A673 (cell line): ENCODE measurements at regions of chr14 and their contacts with region 1.

Region 1: GRCh38 chr14:58501214-58501816 is 73.8 kb downstream of the KIAA0586 start:
- DNase-seq: peak; percentile 74
- H3K4me3 ChIP-seq: no peak overlapping the region
- H3K27ac ChIP-seq: no peak overlapping the region
- H3K4me1 ChIP-seq: no peaks in the 10 kb centered on the region
- H3K27me3 ChIP-seq: no peaks in the 10 kb centered on the region
- CTCF ChIP-seq: peak; percentile 89

Region 2: DNA sequence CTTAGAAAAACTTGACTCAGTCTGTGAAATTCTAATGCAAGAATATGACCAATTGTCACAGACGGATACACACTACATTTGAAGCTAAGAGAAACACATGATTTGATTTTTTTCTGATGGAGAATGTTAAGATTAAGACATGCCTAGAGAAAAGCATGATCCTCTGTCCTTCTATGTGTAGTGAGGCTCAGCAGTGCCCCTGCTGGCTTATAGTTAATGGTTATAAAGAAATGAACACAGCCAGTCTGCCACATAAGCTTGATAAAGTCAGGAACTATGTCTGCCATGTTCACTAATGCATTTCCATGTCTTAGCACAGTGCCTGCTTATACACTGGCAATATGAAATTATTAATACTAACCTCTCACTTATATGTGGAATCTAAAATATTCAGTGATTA is 519.1 kb after region 1 on chr14:
- CTCF ChIA-PET with region 1: interaction called, 14 read pairs
- POLR2A ChIA-PET with region 1: no interaction called
- intact Hi-C with region 1: loop called (anchors 10 kb)
- DNase-seq: peak; percentile 50
- H3K4me3 ChIP-seq: no peak overlapping the region
- H3K27ac ChIP-seq: no peak overlapping the region
- H3K4me1 ChIP-seq: no peaks in the 10 kb centered on the region
- H3K27me3 ChIP-seq: no peaks in the 10 kb centered on the region
- CTCF ChIP-seq: peak; percentile 64

Region 3: DNA sequence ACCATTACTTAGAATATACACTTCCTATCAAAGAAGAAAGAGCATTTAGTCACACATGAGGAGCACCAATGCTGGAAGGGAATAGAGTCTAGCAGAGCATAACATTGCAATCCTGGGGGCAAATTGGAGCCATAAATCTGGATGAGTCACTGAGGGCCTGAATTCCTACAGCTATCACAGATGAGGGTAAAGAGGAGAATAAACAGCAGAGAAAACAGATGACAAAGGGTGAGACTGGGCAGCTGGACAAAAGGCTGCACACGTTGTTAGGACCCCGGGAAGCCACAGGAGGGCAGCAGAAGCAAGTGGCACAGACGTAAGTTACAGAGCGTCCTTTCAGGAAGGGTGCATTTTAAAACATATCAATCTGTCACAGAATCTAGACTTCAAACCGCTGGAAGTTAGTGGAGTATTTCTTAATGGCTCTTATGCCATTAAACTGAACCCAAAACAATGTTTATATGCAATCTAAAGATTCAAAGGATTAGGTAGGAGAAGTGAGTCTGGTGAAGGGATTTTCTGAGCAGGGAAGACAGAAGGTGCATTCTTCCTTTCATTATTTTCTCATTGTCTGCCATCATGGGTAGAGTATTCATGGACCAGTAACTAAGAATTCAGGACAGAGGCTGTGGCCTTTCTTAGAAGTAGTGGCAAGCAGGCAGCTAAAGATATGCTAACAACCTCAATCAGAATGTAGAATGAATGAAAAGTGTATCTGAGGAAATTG is 527.3 kb after region 1 on chr14:
- CTCF ChIA-PET with region 1: interaction called, 7 read pairs
- POLR2A ChIA-PET with region 1: no interaction called
- intact Hi-C with region 1: loop called (anchors 10 kb)
- DNase-seq: peak; percentile 75
- H3K4me3 ChIP-seq: no peak overlapping the region
- H3K27ac ChIP-seq: no peak overlapping the region
- H3K4me1 ChIP-seq: no peaks in the 10 kb centered on the region
- H3K27me3 ChIP-seq: no peaks in the 10 kb centered on the region
- CTCF ChIP-seq: peak; percentile 90

Region 4: GRCh38 chr14:59055439-59056045 is 554.2 kb after region 1 on chr14:
- CTCF ChIA-PET with region 1: interaction called, 12 read pairs
- POLR2A ChIA-PET with region 1: no interaction called
- intact Hi-C with region 1: loop called (anchors 5 kb)
- DNase-seq: peak; percentile 56
- H3K4me3 ChIP-seq: no peak overlapping the region
- H3K27ac ChIP-seq: no peak overlapping the region
- H3K4me1 ChIP-seq: no peaks in the 10 kb centered on the region
- H3K27me3 ChIP-seq: peaks cover 1% of the 10 kb centered on the region
- CTCF ChIP-seq: peak; percentile 79